ENCODE measurements at regions of chr12 and their contacts with region 1.

Region 1: GRCh38 chr12:102061560-102062418 is at the start of gene WASHC3:
- DNase-seq: peak; percentile 95
- H3K4me3 Mint-ChIP-seq: peak within 1 kb of the TSS; percentile 92
- H3K27ac Mint-ChIP-seq: peak within 1 kb of the TSS; percentile 99
- H3K4me1 Mint-ChIP-seq: peaks cover 38% of the 10 kb centered on the region
- H3K27me3 Mint-ChIP-seq: no peaks in the 10 kb centered on the region
- total RNA-seq, gene WASHC3: 34.0 and 39.0 TPM in 2 replicates

Region 2: GRCh38 chr12:101280006-101280505 is 781.7 kb before region 1 on chr12 and contains the start of gene UTP20:
- intact Hi-C with region 1: loop called (anchors 5 kb)
- DNase-seq: peak; percentile 87
- H3K4me3 Mint-ChIP-seq: peak within 1 kb of the TSS; percentile 91
- H3K27ac Mint-ChIP-seq: peak within 1 kb of the TSS; percentile 84
- H3K4me1 Mint-ChIP-seq: peaks cover 13% of the 10 kb centered on the region
- H3K27me3 Mint-ChIP-seq: peaks cover 21% of the 10 kb centered on the region
- total RNA-seq, gene UTP20: 34.6 and 35.6 TPM in 2 replicates

Region 3: DNA sequence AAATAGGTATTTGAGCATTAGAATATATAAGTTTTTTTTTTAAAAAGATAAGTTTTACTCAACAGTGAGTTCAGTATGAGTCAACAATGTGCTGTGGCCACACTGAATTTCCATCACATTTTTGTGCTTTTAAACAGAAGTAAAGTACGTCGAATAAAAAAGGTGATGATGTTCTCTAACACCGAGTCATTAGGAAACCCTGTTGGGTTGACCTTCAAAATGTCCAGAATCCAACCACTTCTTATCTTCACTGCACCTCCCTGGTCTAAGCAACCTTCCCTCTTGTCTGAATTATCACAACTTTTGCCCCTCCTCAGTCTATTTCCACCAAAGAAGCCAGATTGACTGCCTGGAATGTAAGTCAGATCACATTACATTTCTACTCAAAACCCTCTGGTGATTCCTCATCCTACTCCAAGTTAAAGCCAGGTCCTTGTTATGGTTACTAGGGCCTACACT is 279.5 kb before region 1 on chr12:
- intact Hi-C with region 1: loop called (anchors 10 kb)
- DNase-seq: no peak
- H3K4me3 Mint-ChIP-seq: peak overlapping the region; percentile 0
- H3K27ac Mint-ChIP-seq: peak overlapping the region; percentile 92
- H3K4me1 Mint-ChIP-seq: peaks cover 66% of the 10 kb centered on the region
- H3K27me3 Mint-ChIP-seq: no peaks in the 10 kb centered on the region

Region 4: GRCh38 chr12:102095675-102096263 is 34.0 kb after region 1 on chr12:
- intact Hi-C with region 1: loop called (anchors 2 kb)
- DNase-seq: no peak
- H3K4me3 Mint-ChIP-seq: no peak overlapping the region
- H3K27ac Mint-ChIP-seq: no peak overlapping the region
- H3K4me1 Mint-ChIP-seq: peaks cover 18% of the 10 kb centered on the region
- H3K27me3 Mint-ChIP-seq: no peaks in the 10 kb centered on the region

Region 5: DNA sequence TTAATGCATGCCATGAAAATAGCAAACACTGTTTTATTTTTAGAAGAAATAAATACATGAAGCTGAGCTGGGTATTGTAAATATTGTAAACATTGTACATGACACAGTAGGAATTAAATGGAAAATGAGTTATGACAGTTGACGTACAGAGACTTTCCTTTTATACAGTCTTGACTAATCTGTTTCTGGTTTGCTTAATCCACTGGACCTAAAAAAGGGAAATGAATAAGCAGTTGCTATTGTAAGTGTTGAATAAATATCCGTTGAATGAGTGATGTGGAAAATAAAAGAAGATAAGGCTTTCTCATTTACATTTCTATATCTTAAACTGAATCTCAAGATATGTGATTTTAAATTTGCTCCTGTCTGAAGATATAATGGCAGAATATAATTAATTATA is 120.8 kb after region 1 on chr12:
- intact Hi-C with region 1: loop called (anchors 5 kb)
- DNase-seq: no peak
- H3K4me3 Mint-ChIP-seq: no peak overlapping the region
- H3K27ac Mint-ChIP-seq: peak overlapping the region; percentile 73
- H3K4me1 Mint-ChIP-seq: peaks cover 11% of the 10 kb centered on the region
- H3K27me3 Mint-ChIP-seq: no peaks in the 10 kb centered on the region

Region 6: GRCh38 chr12:102484428-102484958 is 422.7 kb after region 1 on chr12:
- intact Hi-C with region 1: loop called (anchors 5 kb)
- DNase-seq: peak; percentile 53
- H3K4me3 Mint-ChIP-seq: peak overlapping the region; percentile 71
- H3K27ac Mint-ChIP-seq: peak overlapping the region; percentile 96
- H3K4me1 Mint-ChIP-seq: peaks cover 36% of the 10 kb centered on the region
- H3K27me3 Mint-ChIP-seq: no peaks in the 10 kb centered on the region

Region 7: GRCh38 chr12:102939670-102940222 is 878.0 kb after region 1 on chr12:
- intact Hi-C with region 1: no loop called
- DNase-seq: no peak
- H3K4me3 Mint-ChIP-seq: no peak overlapping the region
- H3K27ac Mint-ChIP-seq: no peak overlapping the region
- H3K4me1 Mint-ChIP-seq: no peaks in the 10 kb centered on the region
- H3K27me3 Mint-ChIP-seq: peaks cover 16% of the 10 kb centered on the region

Measured in activated T-helper 2 cell treated with anti-CD3 and anti-CD28 coated beads, Interferon-gamma antibody, Interleukin-2, Interleukin-4, amounts not matched to agents 10 μg/mL and 5 μg/mL and 100 μg/mL, durations not matched to agents 14 hours and 24 hours and 36 hours (primary cell).